Posterior cingulate gyrus (tissue), 11 donors: ENCODE measurements at regions of chr6 and their contacts with region 1.

Region 1: GRCh38 chr6:32700391-32701040 is 34.1 kb upstream of the HLA-DQB1 start:
- DNase-seq: peak in 4 of 10 donors; percentile 17 to 75 (median 28)

Region 2: GRCh38 chr6:32432050-32432450 is 268.5 kb before region 1 on chr6:
- intact Hi-C with region 1: loop called (anchors 1 kb)
- DNase-seq: no peak

Region 3: DNA sequence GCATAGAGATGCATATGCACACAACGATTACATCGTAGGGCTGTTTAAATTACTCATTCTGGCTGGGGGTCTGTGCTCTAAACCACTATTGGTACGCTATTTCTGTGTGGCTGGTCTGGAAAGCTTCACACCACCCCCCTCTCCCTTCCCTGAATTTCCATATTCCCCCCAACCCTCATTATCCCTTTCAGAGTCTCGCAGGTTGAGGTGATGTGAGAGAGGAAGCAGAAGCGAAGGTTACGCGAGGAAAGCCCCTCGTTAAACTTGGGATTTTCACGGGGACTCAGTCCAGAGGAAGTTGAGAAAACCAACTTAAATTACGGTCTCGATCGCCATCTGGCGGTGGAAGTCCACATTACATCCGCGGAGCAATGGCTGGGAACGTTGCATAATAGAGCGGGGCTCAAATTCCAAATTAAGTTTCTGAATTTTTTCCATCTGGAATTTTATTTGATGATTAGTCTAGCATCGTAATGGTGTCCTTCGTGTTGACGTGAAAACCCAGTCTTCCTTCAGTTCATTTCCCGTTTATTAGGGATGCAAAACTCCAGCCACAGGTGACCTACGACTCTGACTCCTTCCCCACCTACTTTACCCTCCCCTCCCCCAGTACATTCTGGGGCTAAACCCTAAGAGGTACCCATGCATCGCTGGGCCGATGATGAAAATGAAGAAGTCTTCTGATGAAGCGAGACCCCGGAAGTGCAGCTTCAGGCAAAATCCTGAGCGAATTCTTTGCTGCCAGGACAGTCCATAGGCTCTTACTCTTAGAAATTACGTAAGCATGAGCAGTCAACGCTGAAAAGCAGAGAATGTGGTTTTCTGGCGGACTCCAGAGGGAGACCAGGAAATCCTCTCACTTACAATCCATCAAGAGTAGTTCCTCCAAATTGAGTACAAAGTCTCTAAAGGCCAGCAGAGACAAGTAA is 96.6 kb after region 1 on chr6:
- intact Hi-C with region 1: loop called (anchors 10 kb)
- DNase-seq: peak; percentile 51 to 94 (median 82)